ENCODE measurements at regions of chr7 and their contacts with region 1.

Region 1: GRCh38 chr7:151759591-151760042 is 117.3 kb downstream of the PRKAG2 start:
- DNase-seq: peak in 3 of 6 donors; percentile 58 to 65 (median 63)
- ATAC-seq: peak; percentile 60 to 85 (median 83)
- H3K4me3 ChIP-seq: no peak overlapping the region
- H3K27ac ChIP-seq: no peak overlapping the region
- H3K4me1 ChIP-seq: no peaks in the 10 kb centered on the region
- H3K27me3 ChIP-seq: no peaks in the 10 kb centered on the region
- CTCF ChIP-seq: peak; percentile 59 to 89 (median 84)

Region 2: DNA sequence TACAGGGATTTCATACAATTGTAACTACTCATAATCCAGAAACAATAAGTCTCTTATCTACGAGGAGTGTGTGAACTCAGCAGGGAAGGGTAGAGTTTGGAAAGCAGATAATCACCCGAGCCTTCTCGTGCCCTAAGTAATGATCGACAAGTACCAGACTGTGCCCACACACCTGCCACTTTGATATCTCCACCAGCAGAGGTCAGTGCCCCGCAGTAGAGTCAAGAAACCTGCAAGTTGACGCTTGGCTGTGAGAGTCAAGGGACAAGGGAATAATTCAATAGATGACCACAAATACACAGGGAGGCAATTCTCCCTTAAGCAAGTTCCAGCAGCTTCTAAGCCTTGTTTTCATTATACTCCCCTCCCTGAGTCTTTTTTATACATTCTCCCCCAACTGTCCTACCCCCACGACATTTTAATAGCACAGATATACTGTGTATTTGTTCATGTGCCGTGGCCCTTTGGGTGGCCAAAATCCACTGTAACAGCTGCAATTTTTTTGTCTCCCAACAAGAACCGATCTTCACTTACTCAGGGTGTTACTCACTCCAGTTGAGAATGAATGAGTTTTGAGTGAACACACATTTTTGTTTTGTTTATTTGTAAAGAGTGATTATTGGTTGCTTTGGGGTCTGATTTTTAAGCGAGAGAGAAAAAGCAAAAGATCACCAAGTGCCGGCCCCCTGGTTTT is 133.0 kb before region 1 on chr7:
- intact Hi-C with region 1: loop called in 2 of 3 experiments (anchors 5 to 10 kb)
- DNase-seq: peak in 4 of 6 donors; percentile 46 to 72 (median 50)
- ATAC-seq: peak; percentile 81 to 96 (median 94)
- H3K4me3 ChIP-seq: no peak overlapping the region
- H3K27ac ChIP-seq: no peak overlapping the region
- H3K4me1 ChIP-seq: peaks cover 0 to 7% (median 3%) of the 10 kb centered on the region in 3 donors
- H3K27me3 ChIP-seq: no peaks in the 10 kb centered on the region
- CTCF ChIP-seq: peak in 3 of 4 donors; percentile 32 to 51 (median 46)